ENCODE measurements at regions of chr11 and their contacts with region 1.

Region 1: DNA sequence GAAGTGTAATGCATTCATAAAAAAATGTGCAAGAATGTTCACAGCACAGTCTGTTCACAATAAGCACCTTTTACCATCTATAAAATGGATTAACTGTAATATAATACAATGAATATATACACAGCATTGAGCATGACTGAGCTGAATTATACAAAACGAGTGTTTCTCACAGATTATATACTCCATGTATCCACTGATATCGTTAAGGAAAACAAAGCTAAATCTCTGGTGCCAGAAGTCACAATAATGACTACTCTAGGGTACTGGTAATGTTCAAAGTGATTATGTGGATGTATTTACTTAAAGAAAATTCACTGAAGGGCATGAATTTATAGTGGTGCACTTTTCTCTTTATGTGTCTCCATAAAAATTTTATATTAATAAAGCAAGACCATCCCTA is 33.2 kb downstream of the ACAT1 start:
- DNase-seq: no peak
- ATAC-seq: no peak
- H3K4me3 ChIP-seq: no peak overlapping the region
- H3K27ac ChIP-seq: no peak overlapping the region
- H3K4me1 ChIP-seq: no peaks in the 10 kb centered on the region
- H3K27me3 ChIP-seq: no peaks in the 10 kb centered on the region
- CTCF ChIP-seq: no peak

Region 2: GRCh38 chr11:108193725-108194124 is 39.1 kb after region 1 on chr11:
- intact Hi-C with region 1: loop called in 1 of 2 experiments (anchors 5 kb)
- DNase-seq: no peak
- ATAC-seq: no peak
- H3K4me3 ChIP-seq: no peak overlapping the region
- H3K27ac ChIP-seq: no peak overlapping the region
- H3K4me1 ChIP-seq: no peaks in the 10 kb centered on the region
- H3K27me3 ChIP-seq: no peaks in the 10 kb centered on the region
- CTCF ChIP-seq: no peak